ENCODE measurements at regions of chr17 and their contacts with region 1.

Region 1: GRCh38 chr17:64129764-64130558 is at the start of gene ERN1:
- DNase-seq: peak; percentile 97
- ATAC-seq: peak; percentile 85 to 94 (median 88)
- H3K4me3 ChIP-seq: peak within 1 kb of the TSS; percentile 72 to 86 (median 75)
- H3K27ac ChIP-seq: peak within 1 kb of the TSS; percentile 89 to 99 (median 95)
- H3K4me1 ChIP-seq: peaks cover 0 to 45% (median 6%) of the 10 kb centered on the region in 4 donors
- H3K27me3 ChIP-seq: no peaks in the 10 kb centered on the region
- CTCF ChIP-seq: no peak
- POLR2A ChIP-seq: peak; percentile 97
- total RNA-seq, gene ERN1: 22.7 to 47.6 (median 28.7) TPM

Region 2: GRCh38 chr17:63919311-63919723 is 210.6 kb before region 1 on chr17:
- intact Hi-C with region 1: loop called in 1 of 2 experiments (anchors 10 kb)
- DNase-seq: peak in 1 of 3 donors; percentile 46
- ATAC-seq: peak; percentile 84 to 96 (median 88)
- H3K4me3 ChIP-seq: no peak overlapping the region
- H3K27ac ChIP-seq: no peak overlapping the region
- H3K4me1 ChIP-seq: no peaks in the 10 kb centered on the region
- H3K27me3 ChIP-seq: no peaks in the 10 kb centered on the region
- CTCF ChIP-seq: peak; percentile 83 to 92 (median 90)
- POLR2A ChIP-seq: no peak

Region 3: DNA sequence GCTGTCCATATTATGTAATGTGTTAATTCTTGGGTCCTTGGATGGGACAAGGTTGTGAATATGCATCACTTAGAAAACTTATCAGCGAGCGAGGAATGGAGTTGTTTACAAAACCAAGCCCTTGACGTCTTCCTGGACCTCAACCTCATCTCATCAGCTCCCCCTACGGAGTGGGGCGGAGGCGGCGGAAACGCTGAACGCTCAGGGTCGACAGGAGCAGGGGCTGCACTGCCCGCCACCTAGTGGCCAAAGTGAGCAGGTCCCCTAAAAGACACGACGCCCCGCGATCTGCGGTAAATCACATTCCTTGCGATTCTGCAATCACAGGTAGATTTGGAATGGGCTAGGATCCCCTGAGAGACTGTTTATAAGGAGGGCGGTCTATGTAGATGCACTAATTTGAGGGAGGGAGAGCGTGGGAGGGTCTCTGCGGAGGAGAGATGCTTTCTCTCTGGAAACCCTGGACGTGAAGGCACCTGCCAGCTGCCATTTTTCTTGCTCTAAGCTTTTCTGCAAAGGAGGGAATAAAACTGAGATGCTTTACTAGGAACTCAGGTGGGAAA is 104.1 kb before region 1 on chr17:
- intact Hi-C with region 1: loop called (anchors 5 to 10 kb)
- DNase-seq: peak; percentile 69 to 84 (median 81)
- ATAC-seq: peak; percentile 82 to 90 (median 86)
- H3K4me3 ChIP-seq: no peak overlapping the region
- H3K27ac ChIP-seq: peak overlapping the region in 1 of 3 donors; percentile 6
- H3K4me1 ChIP-seq: peaks cover 0 to 4% (median 0%) of the 10 kb centered on the region in 4 donors
- H3K27me3 ChIP-seq: no peaks in the 10 kb centered on the region
- CTCF ChIP-seq: peak; percentile 77 to 92 (median 84)
- POLR2A ChIP-seq: no peak

Region 4: DNA sequence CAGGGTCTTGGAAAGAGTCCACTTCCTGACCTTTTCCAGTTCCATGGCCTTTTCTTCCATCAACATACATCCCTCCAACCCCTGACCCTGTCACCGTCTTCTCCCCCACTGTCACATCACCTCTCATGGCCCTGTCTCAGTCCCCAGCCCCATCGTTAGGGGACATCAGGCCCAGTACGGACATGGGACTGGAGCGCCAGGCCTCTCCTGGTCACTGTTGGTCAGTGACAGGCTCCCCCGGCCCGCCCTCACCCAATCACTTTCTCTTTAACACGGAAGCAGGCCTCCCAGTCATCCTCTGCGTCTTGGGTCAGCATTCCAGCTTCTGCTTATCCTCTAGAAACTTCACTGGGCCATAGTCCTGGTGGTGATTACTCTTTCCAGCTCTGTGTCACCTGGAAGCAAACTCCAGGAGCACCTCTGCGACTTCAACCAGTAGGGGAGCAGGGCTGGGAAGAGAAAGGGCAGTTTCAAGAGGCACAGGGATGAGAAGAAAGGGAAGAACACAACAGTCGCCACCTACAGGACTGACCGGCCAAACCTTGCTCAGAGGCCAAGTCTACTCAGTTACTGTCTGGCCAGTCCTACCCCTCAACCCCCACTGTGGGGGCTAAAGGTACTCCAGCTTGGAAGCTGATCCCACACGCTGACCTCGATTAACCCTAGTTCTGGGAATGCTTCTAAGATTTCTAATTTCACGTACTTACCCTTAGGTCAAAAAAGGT is 93.6 kb before region 1 on chr17:
- intact Hi-C with region 1: loop called in 1 of 2 experiments (anchors 10 kb)
- DNase-seq: peak in 1 of 3 donors; percentile 36
- ATAC-seq: peak in 2 of 4 donors; percentile 16 to 29
- H3K4me3 ChIP-seq: no peak overlapping the region
- H3K27ac ChIP-seq: no peak overlapping the region
- H3K4me1 ChIP-seq: peaks cover 0 to 5% (median 0%) of the 10 kb centered on the region in 4 donors
- H3K27me3 ChIP-seq: no peaks in the 10 kb centered on the region
- CTCF ChIP-seq: peak in 1 of 4 donors; percentile 4
- POLR2A ChIP-seq: no peak

Region 5: DNA sequence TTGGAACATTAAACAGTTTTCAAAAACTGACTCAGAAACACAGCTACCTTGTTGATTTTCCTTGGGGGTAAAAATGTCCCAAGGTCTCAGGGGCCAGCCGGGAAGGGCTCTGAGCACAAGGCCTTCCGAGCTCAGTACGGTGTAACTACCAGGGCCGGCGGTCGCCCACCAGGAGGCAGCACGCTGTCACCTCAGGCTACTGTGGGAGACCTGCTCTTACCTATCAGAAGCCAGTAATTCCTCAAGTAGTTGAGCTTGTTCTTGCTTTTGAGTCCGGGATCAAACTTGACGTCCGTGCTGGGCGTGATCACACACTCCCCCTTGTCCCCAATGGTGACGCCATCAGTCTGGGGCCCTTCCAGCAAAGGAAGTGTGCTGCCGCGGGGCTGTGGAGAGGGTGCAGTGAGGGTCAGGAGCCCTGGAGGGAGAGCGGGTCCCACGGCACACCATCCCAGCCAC is 66.2 kb before region 1 on chr17:
- intact Hi-C with region 1: loop called in 1 of 2 experiments (anchors 10 kb)
- DNase-seq: peak in 2 of 3 donors; percentile 62 to 71
- ATAC-seq: peak; percentile 43 to 73 (median 60)
- H3K4me3 ChIP-seq: no peak overlapping the region
- H3K27ac ChIP-seq: peak overlapping the region in 1 of 3 donors; percentile 29
- H3K4me1 ChIP-seq: peaks cover 0 to 14% (median under 1%) of the 10 kb centered on the region in 4 donors
- H3K27me3 ChIP-seq: no peaks in the 10 kb centered on the region
- CTCF ChIP-seq: peak; percentile 25 to 53 (median 47)
- POLR2A ChIP-seq: no peak